Endothelial cell of umbilical vein (primary cell): ENCODE measurements at regions of chr12 and their contacts with region 1.

Region 1: GRCh38 chr12:116703214-116703795 is 34.6 kb downstream of the SPRING1 start:
- DNase-seq: peak; percentile 61
- H3K4me3 ChIP-seq: no peak overlapping the region
- H3K27ac ChIP-seq: no peak overlapping the region
- H3K4me1 ChIP-seq: no peaks in the 10 kb centered on the region
- H3K27me3 ChIP-seq: no peaks in the 10 kb centered on the region
- CTCF ChIP-seq: peak; percentile 78 to 84
- POLR2A ChIP-seq: no peak

Region 2: GRCh38 chr12:116266168-116266601 is 437.1 kb before region 1 on chr12:
- CTCF ChIA-PET with region 1: no interaction called
- POLR2A ChIA-PET with region 1: no interaction called
- dilution Hi-C with region 1: no loop called
- intact Hi-C with region 1: no loop called
- DNase-seq: peak; percentile 40
- H3K4me3 ChIP-seq: no peak overlapping the region
- H3K27ac ChIP-seq: no peak overlapping the region
- H3K4me1 ChIP-seq: peaks cover 13% of the 10 kb centered on the region
- H3K27me3 ChIP-seq: no peaks in the 10 kb centered on the region
- CTCF ChIP-seq: no peak
- POLR2A ChIP-seq: no peak

Region 3: GRCh38 chr12:116717466-116718437 is 14.4 kb after region 1 on chr12:
- CTCF ChIA-PET with region 1: interaction called, 17 read pairs
- POLR2A ChIA-PET with region 1: no interaction called
- dilution Hi-C with region 1: no loop called
- intact Hi-C with region 1: no loop called
- DNase-seq: no peak
- H3K4me3 ChIP-seq: no peak overlapping the region
- H3K27ac ChIP-seq: peak overlapping the region; percentile 66
- H3K4me1 ChIP-seq: peaks cover 19% of the 10 kb centered on the region
- H3K27me3 ChIP-seq: no peaks in the 10 kb centered on the region
- CTCF ChIP-seq: no peak
- POLR2A ChIP-seq: no peak

Region 4: GRCh38 chr12:116880817-116881324 is 177.6 kb after region 1 on chr12:
- CTCF ChIA-PET with region 1: interaction called, 61 read pairs
- POLR2A ChIA-PET with region 1: no interaction called
- dilution Hi-C with region 1: no loop called
- intact Hi-C with region 1: loop called (anchors 1 kb)
- DNase-seq: peak; percentile 13
- H3K4me3 ChIP-seq: no peak overlapping the region
- H3K27ac ChIP-seq: no peak overlapping the region
- H3K4me1 ChIP-seq: no peaks in the 10 kb centered on the region
- H3K27me3 ChIP-seq: peaks cover 57 to 72% of the 10 kb centered on the region in 2 experiments
- CTCF ChIP-seq: no peak
- POLR2A ChIP-seq: no peak

Region 5: DNA sequence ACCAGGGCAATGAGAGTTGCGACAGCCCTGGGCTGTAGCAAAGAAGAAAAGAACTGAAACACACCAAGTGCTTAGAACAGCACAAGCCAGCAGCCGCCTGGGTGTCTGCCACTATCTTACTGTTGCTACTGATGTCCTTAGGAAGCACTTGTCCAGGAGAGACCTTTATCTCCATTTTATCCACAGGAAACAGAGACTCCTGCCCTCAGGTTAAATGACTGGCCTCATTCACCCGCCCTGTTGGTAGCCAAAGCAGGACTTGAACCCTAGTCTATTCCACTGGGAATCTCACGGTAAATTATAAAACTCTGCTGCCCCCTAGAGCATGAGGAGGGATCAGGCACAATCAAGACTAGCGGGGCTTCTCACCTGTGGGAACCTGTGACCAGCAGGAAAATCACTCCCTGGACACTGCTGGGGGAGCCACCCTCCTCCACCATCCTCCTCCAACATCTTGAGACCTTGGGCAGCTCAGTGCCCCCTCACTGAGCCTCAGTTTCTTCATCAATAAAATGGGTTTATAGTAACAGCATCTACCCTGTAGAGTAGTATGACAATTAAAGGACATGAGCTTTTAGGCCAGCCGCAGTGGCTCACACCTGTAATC is 416.4 kb after region 1 on chr12:
- CTCF ChIA-PET with region 1: interaction called, 6 read pairs
- POLR2A ChIA-PET with region 1: no interaction called
- dilution Hi-C with region 1: no loop called
- intact Hi-C with region 1: loop called (anchors 1 kb)
- DNase-seq: no peak
- H3K4me3 ChIP-seq: no peak overlapping the region
- H3K27ac ChIP-seq: no peak overlapping the region
- H3K4me1 ChIP-seq: peaks cover 3% of the 10 kb centered on the region
- H3K27me3 ChIP-seq: no peaks in the 10 kb centered on the region
- CTCF ChIP-seq: peak; percentile 46 to 51
- POLR2A ChIP-seq: no peak

Region 6: GRCh38 chr12:117155278-117156060 is 452.2 kb after region 1 on chr12:
- CTCF ChIA-PET with region 1: interaction called, 9 read pairs
- POLR2A ChIA-PET with region 1: no interaction called
- dilution Hi-C with region 1: no loop called
- intact Hi-C with region 1: loop called (anchors 1 kb)
- DNase-seq: peak; percentile 12
- H3K4me3 ChIP-seq: no peak overlapping the region
- H3K27ac ChIP-seq: no peak overlapping the region
- H3K4me1 ChIP-seq: no peaks in the 10 kb centered on the region
- H3K27me3 ChIP-seq: no peaks in the 10 kb centered on the region
- CTCF ChIP-seq: peak; percentile 66 to 78
- POLR2A ChIP-seq: no peak

Region 7: DNA sequence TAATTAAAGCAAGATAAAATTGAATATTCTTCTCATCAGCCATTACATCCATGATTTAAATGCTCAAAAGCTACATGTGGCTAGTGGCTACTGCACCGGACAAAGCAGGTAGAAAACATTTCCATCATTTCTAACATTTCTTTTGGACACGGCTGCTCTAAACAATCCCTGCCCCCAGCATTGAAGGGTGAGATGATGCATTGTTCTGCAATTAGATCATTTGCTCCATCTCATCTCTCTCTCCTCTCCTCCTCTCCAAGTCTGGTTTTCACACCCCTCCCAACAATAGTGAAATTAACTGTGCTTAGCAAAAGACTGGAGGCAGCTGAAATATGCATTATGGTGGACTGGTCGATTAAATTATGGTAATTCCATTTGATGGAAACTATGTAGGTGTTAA is 977.0 kb after region 1 on chr12:
- CTCF ChIA-PET with region 1: no interaction called
- POLR2A ChIA-PET with region 1: no interaction called
- dilution Hi-C with region 1: no loop called
- intact Hi-C with region 1: no loop called
- DNase-seq: peak; percentile 81
- H3K4me3 ChIP-seq: no peak overlapping the region
- H3K27ac ChIP-seq: peak overlapping the region; percentile 85
- H3K4me1 ChIP-seq: peaks cover 45% of the 10 kb centered on the region
- H3K27me3 ChIP-seq: no peaks in the 10 kb centered on the region
- CTCF ChIP-seq: no peak
- POLR2A ChIP-seq: no peak